Activated naive CD4-positive, alpha-beta T cell treated with anti-CD3 and anti-CD28 coated beads for 36 hours (primary cell): ENCODE measurements at regions of chr5 and their contacts with region 1.

Region 1: GRCh38 chr5:42889311-42889933 is 77.7 kb upstream of the SELENOP start:
- DNase-seq: peak; percentile 86
- H3K4me3 Mint-ChIP-seq: no peak overlapping the region
- H3K27ac Mint-ChIP-seq: no peak overlapping the region
- H3K4me1 Mint-ChIP-seq: no peaks in the 10 kb centered on the region
- H3K27me3 Mint-ChIP-seq: peaks cover 2% of the 10 kb centered on the region

Region 2: GRCh38 chr5:41856644-41857491 is 1032.6 kb before region 1 on chr5:
- CTCF ChIA-PET with region 1: interaction called, 3 read pairs
- intact Hi-C with region 1: loop called (anchors 5 kb)
- DNase-seq: peak; percentile 69
- H3K4me3 Mint-ChIP-seq: no peak overlapping the region
- H3K27ac Mint-ChIP-seq: no peak overlapping the region
- H3K4me1 Mint-ChIP-seq: peaks cover 26% of the 10 kb centered on the region
- H3K27me3 Mint-ChIP-seq: no peaks in the 10 kb centered on the region

Region 3: DNA sequence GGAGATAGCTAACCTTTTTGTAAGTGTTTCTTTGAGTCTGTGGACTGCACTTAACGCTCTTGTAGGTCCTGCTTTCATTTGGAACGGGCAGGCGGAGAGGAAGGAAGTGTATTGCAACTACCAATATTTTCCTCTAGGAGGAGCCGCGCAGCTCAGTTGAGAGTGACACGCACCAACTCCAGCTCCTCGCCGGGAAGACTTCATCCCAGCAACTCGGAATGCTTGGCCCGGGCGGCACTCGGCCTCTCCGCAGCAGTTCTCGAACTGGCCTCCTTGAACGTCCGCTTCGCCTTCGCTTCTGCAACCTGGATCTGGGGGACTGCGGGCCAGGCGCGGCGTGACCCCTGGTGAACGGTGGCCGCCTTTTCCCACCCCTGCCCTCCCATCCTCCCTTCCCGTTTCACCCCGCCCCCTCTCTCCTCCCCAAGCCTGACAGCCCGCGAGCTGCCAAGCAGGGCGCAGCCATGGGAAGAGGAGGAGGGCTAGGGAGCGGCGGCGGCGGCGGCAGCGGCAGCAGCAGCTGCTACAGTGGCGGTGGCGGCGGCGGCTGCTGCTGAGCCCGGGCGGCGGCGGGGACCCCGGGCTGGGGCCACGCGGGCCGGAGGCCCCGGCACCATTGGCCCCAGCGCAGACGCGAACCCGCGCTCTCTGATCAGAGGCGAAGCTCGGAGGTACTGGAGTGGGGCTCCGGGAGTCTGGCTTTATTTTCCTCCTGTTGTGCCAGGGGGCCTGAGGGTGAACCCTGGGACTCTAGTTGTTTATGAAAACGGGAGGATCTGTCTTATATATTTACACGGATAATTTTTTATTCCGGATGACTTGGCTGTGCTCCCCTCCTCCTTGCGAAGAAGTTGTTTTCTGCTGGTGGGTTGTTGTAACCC is 465.9 kb before region 1 on chr5 and contains the start of gene GHR:
- CTCF ChIA-PET with region 1: interaction called, 6 read pairs
- intact Hi-C with region 1: loop called (anchors 1 kb)
- DNase-seq: peak; percentile 40
- H3K4me3 Mint-ChIP-seq: no peak within 1 kb of the TSS
- H3K27ac Mint-ChIP-seq: no peak within 1 kb of the TSS
- H3K4me1 Mint-ChIP-seq: no peaks in the 10 kb centered on the region
- H3K27me3 Mint-ChIP-seq: peaks cover 22% of the 10 kb centered on the region
- total RNA-seq, gene GHR: not detected

Region 4: DNA sequence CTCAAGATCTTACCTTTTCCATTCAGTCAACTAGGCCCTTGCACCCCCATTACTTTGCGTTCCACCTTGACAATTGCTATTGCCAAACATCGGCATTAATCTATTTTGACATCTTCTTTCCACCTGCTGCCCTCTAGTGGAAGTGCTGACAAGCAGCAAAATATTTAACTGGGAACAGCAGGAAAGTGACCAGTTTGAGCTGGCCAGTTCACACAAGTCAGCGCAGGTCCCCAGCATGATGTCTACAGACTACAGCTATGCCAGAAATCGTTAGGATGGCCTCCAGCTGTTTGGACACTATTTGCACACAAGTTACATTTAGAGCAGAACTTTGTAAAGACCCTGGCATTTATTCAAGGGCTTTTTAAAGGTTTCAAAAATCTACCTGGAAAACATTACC is 306.1 kb before region 1 on chr5:
- CTCF ChIA-PET with region 1: interaction called, 3 read pairs
- intact Hi-C with region 1: loop called (anchors 5 kb)
- DNase-seq: peak; percentile 50
- H3K4me3 Mint-ChIP-seq: no peak overlapping the region
- H3K27ac Mint-ChIP-seq: no peak overlapping the region
- H3K4me1 Mint-ChIP-seq: no peaks in the 10 kb centered on the region
- H3K27me3 Mint-ChIP-seq: peaks cover 14% of the 10 kb centered on the region

Region 5: GRCh38 chr5:42767491-42768105 is 121.8 kb before region 1 on chr5:
- CTCF ChIA-PET with region 1: interaction called, 5 read pairs
- intact Hi-C with region 1: loop called (anchors 1 kb)
- DNase-seq: no peak
- H3K4me3 Mint-ChIP-seq: no peak overlapping the region
- H3K27ac Mint-ChIP-seq: no peak overlapping the region
- H3K4me1 Mint-ChIP-seq: no peaks in the 10 kb centered on the region
- H3K27me3 Mint-ChIP-seq: peaks cover 7% of the 10 kb centered on the region

Region 6: DNA sequence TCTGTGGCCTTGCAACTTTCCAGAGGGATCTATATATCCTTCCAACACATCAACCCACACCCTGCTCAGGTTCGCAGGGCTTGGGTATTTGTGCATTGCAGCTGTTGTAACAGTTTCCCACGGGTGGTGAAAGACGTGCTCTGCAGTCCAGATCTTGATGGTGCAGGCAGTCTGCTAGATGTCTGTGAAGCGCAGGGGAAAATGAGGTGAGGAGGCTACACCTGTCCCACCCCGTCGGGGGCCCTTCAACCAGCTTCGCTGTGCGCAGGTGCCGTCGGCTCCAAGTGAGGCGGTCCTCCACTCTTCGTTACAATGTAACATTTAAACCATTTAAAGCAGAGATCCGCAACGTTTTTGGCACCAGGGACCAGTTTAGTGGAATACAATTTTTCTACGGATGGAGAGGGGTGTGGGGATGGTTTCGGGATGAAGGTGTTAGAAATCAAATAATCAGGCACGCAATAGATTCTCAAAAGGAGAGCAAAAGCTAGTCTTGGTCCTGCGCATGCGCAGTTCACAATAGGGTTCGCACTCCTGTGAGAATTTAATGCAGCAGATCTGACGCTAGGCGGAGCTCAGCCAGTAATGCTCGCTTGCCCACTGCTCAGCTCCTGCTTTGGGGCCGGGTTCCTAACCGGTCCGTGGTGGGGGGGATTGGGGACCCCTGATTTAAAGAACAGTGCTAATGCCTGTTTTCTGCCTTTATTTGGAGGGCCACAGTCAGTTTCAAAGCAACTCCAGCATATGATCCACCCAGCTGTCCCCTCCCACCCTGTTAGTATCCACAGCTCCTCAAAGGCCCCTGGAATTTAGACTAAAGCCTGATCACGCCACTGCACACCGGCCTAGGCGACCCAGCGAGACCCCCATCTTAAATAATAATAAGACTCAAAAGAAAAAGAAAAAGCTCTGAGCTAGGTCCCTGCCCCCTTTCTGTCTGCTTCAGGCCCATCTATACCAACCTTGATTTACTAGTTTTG is 19.4 kb after region 1 on chr5:
- CTCF ChIA-PET with region 1: interaction called, 16 read pairs
- intact Hi-C with region 1: no loop called
- DNase-seq: peak; percentile 94
- H3K4me3 Mint-ChIP-seq: peak overlapping the region; percentile 92
- H3K27ac Mint-ChIP-seq: peak overlapping the region; percentile 75
- H3K4me1 Mint-ChIP-seq: peaks cover 10% of the 10 kb centered on the region
- H3K27me3 Mint-ChIP-seq: peaks cover 10% of the 10 kb centered on the region